ENCODE measurements at regions of chr5 and their contacts with region 1.

Region 1: DNA sequence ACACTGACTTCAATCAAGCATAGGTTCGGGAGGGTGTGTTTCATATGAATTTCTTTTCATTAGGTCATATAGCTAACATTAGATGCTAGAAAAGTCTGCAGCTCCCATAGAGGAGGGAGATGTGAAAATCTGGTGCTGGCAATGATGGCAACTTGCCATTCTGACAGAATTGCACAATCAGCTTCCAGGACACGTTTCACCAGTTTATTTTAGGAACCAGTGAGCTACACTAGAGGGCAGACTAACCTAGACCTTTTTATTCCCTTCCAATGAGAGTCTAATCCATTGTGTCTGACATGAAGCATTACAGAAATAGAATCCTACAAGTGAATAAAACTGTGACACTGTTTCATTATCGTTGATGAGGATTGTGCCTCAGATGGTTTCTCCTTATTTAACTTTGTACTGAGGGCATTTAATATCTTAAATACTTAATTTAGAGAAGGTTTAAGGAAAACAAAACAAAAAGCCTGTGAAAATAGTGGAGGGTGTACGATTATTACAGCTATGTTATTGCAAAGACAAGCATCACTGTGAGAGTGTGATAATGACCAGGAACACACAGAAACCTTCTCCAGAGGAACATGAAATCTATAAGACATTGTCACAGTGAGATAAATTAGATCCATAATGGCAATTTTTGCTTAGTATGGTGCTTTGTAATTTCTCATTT is 363.3 kb upstream of the RPS23 start:
- DNase-seq: no peak
- H3K4me3 ChIP-seq: no peak overlapping the region
- H3K27ac ChIP-seq: no peak overlapping the region
- H3K4me1 ChIP-seq: peaks cover 0 to 8% (median 0%) of the 10 kb centered on the region in 6 donors
- H3K27me3 ChIP-seq: no peaks in the 10 kb centered on the region
- CTCF ChIP-seq: peak; percentile 9 to 66 (median 56)
- POLR2A ChIP-seq: no peak

Region 2: DNA sequence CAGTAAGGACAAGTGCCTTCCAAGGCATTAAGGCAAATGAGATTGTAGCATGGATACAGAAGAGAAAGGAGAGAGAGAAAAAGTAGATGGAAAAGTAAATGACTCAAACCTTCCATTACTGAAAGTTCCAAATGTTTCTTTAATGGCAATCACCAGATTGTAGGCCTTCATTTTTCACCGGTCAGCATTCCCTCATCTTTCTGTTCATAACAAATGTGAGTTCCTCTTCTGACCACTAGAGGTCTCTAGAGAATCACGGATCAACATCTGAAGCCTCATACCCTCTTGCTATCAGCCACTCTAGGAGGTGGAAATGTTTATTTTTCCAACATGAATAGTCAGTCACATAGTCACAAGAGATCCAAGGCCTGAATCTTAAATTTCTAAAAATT is 289.7 kb before region 1 on chr5:
- intact Hi-C with region 1: no loop called
- DNase-seq: no peak
- H3K4me3 ChIP-seq: no peak overlapping the region
- H3K27ac ChIP-seq: peak overlapping the region in 5 of 8 donors; percentile 7 to 34 (median 16)
- H3K4me1 ChIP-seq: peaks cover 5 to 26% (median 11%) of the 10 kb centered on the region in 6 donors
- H3K27me3 ChIP-seq: no peaks in the 10 kb centered on the region
- CTCF ChIP-seq: peak; percentile 55 to 85 (median 74)
- POLR2A ChIP-seq: no peak

Region 3: DNA sequence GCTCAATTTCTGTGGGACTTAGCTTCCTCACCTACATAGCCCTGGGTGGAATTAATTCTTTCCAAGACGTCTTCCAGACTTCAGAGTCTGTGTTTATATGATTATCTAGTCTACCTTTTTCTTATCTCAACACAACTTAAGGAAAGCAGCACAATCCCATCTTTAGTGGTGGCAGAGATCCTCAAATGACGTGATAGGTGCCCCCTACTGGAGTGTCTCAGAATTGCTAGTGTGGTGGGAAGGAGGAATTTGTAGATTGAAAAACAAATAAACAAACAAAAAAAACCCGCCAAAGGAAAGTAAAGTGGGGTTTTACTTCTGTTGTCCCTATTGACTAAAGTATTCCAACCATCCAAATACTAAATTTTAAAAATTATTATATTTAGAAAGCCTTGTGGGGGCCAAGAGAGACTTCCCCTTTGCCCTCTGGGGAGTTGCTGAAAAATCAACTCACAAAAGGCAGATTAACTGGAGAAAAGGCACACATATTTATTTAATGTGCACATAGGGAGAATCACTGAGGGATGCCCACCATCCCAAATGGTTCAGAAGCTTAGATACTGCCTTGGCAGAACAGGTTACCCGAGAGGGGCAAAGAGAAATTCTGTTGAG is 152.4 kb after region 1 on chr5:
- intact Hi-C with region 1: loop called (anchors 10 kb)
- DNase-seq: no peak
- H3K4me3 ChIP-seq: no peak overlapping the region
- H3K27ac ChIP-seq: no peak overlapping the region
- H3K4me1 ChIP-seq: no peaks in the 10 kb centered on the region
- H3K27me3 ChIP-seq: no peaks in the 10 kb centered on the region
- CTCF ChIP-seq: peak; percentile 6 to 68 (median 50)
- POLR2A ChIP-seq: no peak

Region 4: DNA sequence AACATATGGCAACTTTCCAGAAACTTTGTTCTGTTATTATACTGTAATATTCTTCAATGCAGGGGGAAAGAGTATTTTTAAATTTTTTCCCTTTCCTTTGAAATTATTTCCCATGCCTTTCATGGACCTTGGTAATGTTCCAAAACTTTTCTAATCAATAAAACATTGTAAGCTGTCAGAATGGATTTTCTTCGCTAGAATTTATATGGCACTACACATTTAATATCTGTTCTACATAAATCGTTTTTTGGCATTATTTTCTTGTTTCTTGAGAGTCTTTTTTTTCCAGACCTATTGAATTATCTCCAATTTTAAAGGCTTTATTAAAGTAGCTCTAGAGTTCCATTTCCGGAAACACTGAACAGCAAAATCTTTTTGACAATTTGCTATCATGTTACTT is 186.7 kb after region 1 on chr5:
- intact Hi-C with region 1: no loop called
- DNase-seq: no peak
- H3K4me3 ChIP-seq: no peak overlapping the region
- H3K27ac ChIP-seq: no peak overlapping the region
- H3K4me1 ChIP-seq: no peaks in the 10 kb centered on the region
- H3K27me3 ChIP-seq: no peaks in the 10 kb centered on the region
- CTCF ChIP-seq: no peak
- POLR2A ChIP-seq: no peak